ENCODE measurements at regions of chr10 and their contacts with region 1.

Region 1: DNA sequence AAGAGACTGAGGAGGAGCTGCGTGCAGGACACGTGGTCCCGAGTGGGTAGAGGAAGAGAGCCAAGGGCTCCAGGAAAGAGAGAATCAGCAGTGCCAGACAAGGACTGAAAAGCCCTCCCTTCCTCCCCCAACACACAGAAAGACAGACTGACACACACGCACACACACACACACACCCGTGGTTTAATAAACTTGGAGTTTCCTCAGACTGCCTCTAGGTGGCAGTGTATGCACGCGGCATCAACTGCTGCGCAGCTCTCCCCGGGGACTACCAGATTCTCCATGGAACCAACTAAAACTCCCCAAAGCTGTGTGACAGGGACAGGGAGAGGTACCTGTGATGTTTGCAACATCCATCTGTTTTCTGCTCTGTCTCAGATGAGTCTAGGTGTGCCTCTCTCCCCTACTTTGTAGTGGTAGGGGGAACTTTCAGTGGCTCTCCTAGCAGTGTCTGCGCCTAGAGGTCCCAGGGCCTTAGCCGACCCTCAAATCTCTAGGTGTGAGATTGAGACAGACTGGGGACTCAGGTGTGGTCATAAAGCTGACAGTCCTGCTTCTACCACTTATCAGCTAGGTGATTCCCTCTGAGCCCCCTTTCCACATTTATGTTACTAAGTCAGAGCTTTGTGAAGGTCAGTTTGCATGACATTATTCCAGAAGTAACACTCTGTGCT is 9.3 kb upstream of the TSPAN14 start:
- DNase-seq: peak; percentile 70
- H3K4me3 ChIP-seq: no peak overlapping the region
- H3K27ac ChIP-seq: no peak overlapping the region
- H3K4me1 ChIP-seq: peaks cover 22% of the 10 kb centered on the region
- H3K27me3 ChIP-seq: no peaks in the 10 kb centered on the region
- CTCF ChIP-seq: peak; percentile 80 to 87
- POLR2A ChIP-seq: no peak

Region 2: GRCh38 chr10:80382989-80383388 is 61.8 kb before region 1 on chr10:
- CTCF ChIA-PET with region 1: interaction called, 109 read pairs
- POLR2A ChIA-PET with region 1: no interaction called
- dilution Hi-C with region 1: no loop called
- intact Hi-C with region 1: loop called (anchors 1 kb)
- DNase-seq: peak; percentile 70
- H3K4me3 ChIP-seq: no peak overlapping the region
- H3K27ac ChIP-seq: no peak overlapping the region
- H3K4me1 ChIP-seq: no peaks in the 10 kb centered on the region
- H3K27me3 ChIP-seq: no peaks in the 10 kb centered on the region
- CTCF ChIP-seq: peak; percentile 58 to 63
- POLR2A ChIP-seq: no peak

Region 3: GRCh38 chr10:80459047-80459931 is 14.5 kb after region 1 on chr10:
- CTCF ChIA-PET with region 1: interaction called, 18 read pairs
- POLR2A ChIA-PET with region 1: no interaction called
- dilution Hi-C with region 1: no loop called
- intact Hi-C with region 1: no loop called
- DNase-seq: no peak
- H3K4me3 ChIP-seq: peak overlapping the region in 1 of 3 experiments; percentile 13
- H3K27ac ChIP-seq: peak overlapping the region; percentile 42
- H3K4me1 ChIP-seq: peaks cover 84% of the 10 kb centered on the region
- H3K27me3 ChIP-seq: no peaks in the 10 kb centered on the region
- CTCF ChIP-seq: no peak
- POLR2A ChIP-seq: no peak

Region 4: DNA sequence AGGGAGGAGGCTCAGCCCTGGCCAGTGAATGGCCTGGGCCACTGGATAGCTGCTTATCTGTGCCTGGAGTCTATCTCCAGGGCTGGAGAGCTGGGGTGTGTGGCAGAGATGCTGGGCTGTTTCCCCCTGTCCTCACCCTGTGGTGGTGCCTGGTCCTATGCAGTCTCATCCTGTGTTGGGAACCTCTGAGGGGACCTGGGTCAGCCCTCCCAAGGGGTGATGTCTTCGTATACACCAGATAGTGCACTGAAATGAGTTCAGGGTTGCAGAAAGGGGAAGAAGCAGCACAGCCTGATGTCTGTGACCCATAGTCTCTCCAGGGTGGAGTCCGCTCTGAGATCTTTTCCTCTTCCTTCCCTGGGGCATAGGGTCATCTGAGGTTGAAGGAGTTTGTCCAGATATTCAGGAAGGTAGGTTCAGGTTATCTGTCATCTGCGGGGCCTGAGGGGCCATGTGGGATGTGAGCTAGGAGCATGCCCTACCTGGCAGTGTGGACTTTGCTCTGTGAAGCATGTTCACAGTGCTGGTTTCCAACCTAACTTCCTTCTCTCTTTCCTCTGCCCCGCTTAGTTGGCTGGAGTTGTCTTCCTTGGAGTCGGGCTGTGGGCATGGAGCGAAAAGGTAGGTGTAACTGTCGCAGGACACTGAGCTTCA is 59.5 kb after region 1 on chr10:
- CTCF ChIA-PET with region 1: interaction called, 1,118 read pairs
- POLR2A ChIA-PET with region 1: interaction called, 4 read pairs
- dilution Hi-C with region 1: no loop called
- intact Hi-C with region 1: loop called (anchors 1 kb)
- DNase-seq: no peak
- H3K4me3 ChIP-seq: no peak overlapping the region
- H3K27ac ChIP-seq: peak overlapping the region; percentile 96
- H3K4me1 ChIP-seq: peaks cover 94% of the 10 kb centered on the region
- H3K27me3 ChIP-seq: no peaks in the 10 kb centered on the region
- CTCF ChIP-seq: no peak
- POLR2A ChIP-seq: no peak

Region 5: DNA sequence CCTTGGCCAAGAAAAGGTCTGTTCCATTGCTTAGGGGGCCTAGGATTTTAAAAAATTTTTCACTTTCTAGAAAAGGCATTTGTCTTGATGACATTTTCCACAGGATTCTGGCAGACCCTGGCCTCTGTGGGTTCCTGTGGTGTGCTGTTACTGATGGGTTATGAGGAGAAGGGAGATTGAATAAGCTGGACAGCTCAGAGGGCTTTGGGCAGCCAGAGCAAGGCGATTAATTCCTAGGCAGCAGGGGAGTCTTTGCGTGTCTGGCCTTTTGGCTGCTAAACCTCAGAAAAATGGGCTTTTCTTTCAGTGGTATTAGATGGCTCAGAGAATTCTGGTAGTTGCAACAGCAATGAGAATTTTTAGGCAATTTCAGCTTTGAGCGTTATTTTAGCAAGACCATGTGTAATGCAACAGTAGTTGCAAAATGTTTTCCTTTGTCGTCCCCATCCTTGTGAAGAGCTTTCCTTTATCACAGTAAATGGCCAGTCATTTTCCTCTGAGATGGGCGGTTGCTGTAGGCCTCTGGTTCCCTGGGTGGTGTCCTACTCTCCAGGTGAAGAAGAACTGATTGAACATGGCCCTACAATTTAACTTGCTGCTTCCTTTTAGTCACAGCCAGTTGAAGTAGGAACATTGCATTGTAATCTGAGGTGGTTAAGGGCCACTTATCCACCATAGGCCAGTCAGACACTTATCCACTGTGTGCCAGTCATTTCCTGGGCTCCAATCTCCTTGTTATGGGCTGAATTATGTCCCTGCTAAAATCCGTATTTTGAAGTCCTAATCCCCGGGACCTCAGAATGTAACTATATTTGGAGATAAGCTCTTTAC is 136.1 kb after region 1 on chr10:
- CTCF ChIA-PET with region 1: interaction called, 21 read pairs
- POLR2A ChIA-PET with region 1: no interaction called
- dilution Hi-C with region 1: no loop called
- intact Hi-C with region 1: no loop called
- DNase-seq: no peak
- H3K4me3 ChIP-seq: no peak overlapping the region
- H3K27ac ChIP-seq: no peak overlapping the region
- H3K4me1 ChIP-seq: no peaks in the 10 kb centered on the region
- H3K27me3 ChIP-seq: peaks cover 8 to 11% of the 10 kb centered on the region in 2 experiments
- CTCF ChIP-seq: no peak
- POLR2A ChIP-seq: no peak

Region 6: DNA sequence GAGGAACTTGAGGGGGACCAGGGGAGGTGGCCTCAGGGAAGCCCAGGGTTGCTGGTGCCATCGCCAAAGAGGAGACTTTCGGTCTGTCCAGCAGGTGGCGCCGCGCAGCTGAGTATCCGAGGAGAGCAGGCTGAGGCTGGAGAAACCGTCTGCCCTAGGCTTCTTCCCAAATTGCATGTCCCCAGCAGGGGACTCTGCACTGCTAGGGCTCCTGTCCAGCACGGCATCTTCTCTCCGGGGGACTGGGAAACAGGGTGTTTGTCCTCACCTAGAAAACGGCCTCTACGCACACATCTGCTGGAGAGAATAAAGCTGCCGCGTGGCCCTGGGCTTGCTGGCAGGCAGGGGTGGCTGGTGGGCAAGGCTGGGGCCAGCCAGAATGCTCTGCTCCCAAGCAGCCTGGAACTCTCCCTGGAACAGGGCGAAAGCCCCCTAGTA is 254.8 kb after region 1 on chr10:
- CTCF ChIA-PET with region 1: interaction called, 11 read pairs
- POLR2A ChIA-PET with region 1: no interaction called
- dilution Hi-C with region 1: no loop called
- intact Hi-C with region 1: loop called (anchors 1 kb)
- DNase-seq: peak; percentile 58
- H3K4me3 ChIP-seq: no peak overlapping the region
- H3K27ac ChIP-seq: no peak overlapping the region
- H3K4me1 ChIP-seq: no peaks in the 10 kb centered on the region
- H3K27me3 ChIP-seq: no peaks in the 10 kb centered on the region
- CTCF ChIP-seq: peak; percentile 74 to 92
- POLR2A ChIP-seq: no peak